ENCODE measurements at regions of chr11 and their contacts with region 1.

Region 1: GRCh38 chr11:46445920-46446771 is 54.6 kb upstream of the CHRM4 start:
- DNase-seq: no peak
- H3K4me3 ChIP-seq: no peak overlapping the region
- H3K27ac ChIP-seq: no peak overlapping the region
- H3K4me1 ChIP-seq: no peaks in the 10 kb centered on the region
- H3K27me3 ChIP-seq: no peaks in the 10 kb centered on the region
- CTCF ChIP-seq: no peak

Region 2: DNA sequence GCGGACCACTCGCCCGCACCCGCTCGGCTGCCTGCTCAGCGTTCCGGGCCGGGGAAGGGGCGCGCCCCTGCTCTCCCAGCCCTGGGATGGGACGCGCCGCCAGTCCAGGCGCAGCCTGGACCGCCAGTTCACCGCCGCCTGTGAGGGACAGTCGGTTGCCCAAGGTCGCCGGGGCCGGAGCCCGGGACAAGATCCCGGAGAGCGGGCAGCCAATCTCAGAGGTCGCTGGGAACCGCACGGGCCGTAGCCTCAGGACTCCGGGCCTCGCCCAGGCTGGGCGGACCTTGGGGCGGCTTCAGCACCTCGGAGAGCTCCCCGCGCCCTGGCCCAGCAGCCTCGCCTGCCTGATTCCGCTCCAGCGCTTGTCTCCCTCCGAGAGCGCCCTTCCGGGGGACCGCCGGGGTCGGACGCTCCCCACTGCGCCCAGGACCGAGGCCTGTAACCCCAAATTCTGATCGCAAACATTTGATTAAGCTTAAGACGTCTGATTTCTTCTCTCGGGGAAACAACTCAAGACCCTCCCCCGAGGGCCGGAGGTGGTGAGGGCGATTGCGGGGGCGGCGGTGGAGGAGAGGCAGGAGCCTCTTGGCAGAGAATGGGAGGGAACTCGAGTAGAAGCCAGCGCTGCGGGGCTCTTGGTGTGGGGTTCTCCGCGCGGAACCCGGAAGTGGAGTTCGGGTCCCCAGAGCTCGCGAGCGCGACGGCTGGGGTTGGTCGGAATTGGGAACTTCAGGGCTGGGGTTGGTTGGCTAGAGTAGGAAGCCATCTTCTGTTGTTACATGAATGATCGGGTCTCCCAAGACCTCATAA is 53.5 kb before region 1 on chr11:
- CTCF ChIA-PET with region 1: interaction called, 20 read pairs
- POLR2A ChIA-PET with region 1: no interaction called
- intact Hi-C with region 1: no loop called
- DNase-seq: peak; percentile 66 to 86
- H3K4me3 ChIP-seq: no peak overlapping the region
- H3K27ac ChIP-seq: no peak overlapping the region
- H3K4me1 ChIP-seq: 0 out of 2 replicates have a peak, but pooled peaks cover 4% of the 10 kb centered on the region
- H3K27me3 ChIP-seq: peaks cover 22% of the 10 kb centered on the region
- CTCF ChIP-seq: no peak

Region 3: DNA sequence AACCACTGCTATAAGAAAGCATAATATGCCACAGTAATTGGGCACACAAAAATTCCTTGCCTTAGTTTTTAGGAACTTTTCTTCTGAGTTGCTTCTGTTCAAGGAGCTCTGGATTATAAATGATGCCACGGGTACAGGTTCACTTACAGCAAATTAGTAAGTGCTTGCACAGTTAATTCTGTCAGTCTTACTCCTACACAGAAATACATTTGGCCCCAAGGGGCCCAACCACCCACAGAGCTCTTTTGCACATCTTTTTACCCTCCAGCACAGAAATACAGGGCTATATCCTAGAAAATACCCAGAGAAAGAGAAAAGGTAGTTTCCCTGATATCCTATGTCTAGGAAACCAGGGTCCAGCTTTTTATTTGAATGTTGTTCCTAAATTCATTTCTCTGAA is 32.0 kb after region 1 on chr11:
- CTCF ChIA-PET with region 1: interaction called, 10 read pairs
- POLR2A ChIA-PET with region 1: no interaction called
- intact Hi-C with region 1: no loop called
- DNase-seq: no peak
- H3K4me3 ChIP-seq: no peak overlapping the region
- H3K27ac ChIP-seq: no peak overlapping the region
- H3K4me1 ChIP-seq: peaks cover 6% of the 10 kb centered on the region
- H3K27me3 ChIP-seq: no peaks in the 10 kb centered on the region
- CTCF ChIP-seq: no peak

Region 4: GRCh38 chr11:46554205-46555055 is 108.3 kb after region 1 on chr11:
- CTCF ChIA-PET with region 1: no interaction called
- POLR2A ChIA-PET with region 1: interaction called, 13 read pairs
- intact Hi-C with region 1: no loop called
- DNase-seq: peak; percentile 17 to 97
- H3K4me3 ChIP-seq: peak overlapping the region; percentile 43; the same call in 1 of the 2 replicates
- H3K27ac ChIP-seq: peak overlapping the region; percentile 95
- H3K4me1 ChIP-seq: peaks cover 65% of the 10 kb centered on the region
- H3K27me3 ChIP-seq: no peaks in the 10 kb centered on the region
- CTCF ChIP-seq: no peak

Region 5: DNA sequence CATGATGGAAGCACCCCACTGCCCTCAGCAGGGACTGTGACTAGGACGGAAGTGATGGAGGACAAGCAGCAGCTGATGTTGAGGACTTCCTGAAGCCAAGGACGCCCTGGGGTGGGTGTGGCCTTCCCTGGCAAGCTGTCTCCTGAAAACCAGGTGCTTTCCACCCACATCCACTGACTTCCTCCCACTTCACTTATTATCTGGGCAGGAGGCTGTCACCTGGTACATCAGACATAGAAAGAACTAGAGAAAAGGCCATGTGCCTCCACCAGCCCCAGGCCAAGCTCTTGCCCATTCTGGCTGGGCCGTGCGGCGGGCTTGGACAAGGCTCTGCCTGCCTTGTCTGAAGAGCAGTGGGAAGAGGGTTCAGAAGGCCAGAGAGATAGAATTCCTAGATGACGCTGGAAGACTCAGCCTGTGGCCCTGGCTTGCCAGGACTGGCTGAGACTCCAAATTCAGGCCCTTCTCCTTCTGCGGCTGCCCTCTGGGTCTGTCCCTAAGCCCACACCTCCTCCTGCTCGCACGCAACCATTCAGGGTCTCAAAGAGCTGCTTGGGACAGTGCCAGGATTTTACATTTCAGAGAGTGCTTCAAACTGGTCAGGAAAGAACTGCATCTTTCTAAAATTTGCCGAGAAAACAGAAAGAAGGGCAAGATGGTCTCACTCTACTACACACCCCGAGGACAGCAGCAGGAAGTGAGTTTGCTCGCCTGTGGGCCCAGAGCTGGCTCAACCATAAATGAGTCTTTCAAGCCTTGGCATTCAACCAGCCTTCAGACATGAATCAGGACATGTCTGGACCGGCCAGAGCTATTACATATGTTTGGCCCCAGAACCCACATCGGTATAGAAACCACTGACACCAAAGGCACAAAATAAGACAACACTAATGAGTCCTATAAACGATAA is 241.0 kb after region 1 on chr11:
- CTCF ChIA-PET with region 1: interaction called, 11 read pairs
- POLR2A ChIA-PET with region 1: no interaction called
- intact Hi-C with region 1: no loop called
- DNase-seq: no peak
- H3K4me3 ChIP-seq: no peak overlapping the region
- H3K27ac ChIP-seq: no peak overlapping the region
- H3K4me1 ChIP-seq: no peaks in the 10 kb centered on the region
- H3K27me3 ChIP-seq: no peaks in the 10 kb centered on the region
- CTCF ChIP-seq: no peak

Region 6: DNA sequence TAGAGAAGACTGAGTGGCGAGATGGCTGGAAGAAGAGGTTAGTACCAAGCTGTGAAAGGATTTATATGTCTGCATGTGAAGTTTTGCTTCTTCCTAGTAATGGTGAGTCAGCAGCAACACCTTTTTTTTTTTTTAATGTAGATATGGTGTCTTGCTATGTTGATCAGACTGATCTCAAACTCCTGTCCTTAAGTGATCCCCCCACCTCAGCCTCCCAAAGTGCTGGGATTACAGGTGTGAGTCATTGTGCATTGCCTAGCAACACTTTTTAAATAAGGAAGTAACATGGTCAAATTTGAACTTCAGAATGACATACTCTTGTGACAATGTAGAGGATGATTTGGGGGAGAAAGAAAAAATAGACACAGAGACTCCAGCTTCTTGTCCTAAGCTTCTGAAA is 483.9 kb after region 1 on chr11:
- CTCF ChIA-PET with region 1: no interaction called
- POLR2A ChIA-PET with region 1: interaction called, 22 read pairs
- intact Hi-C with region 1: no loop called
- DNase-seq: peak; percentile 84 to 99
- H3K4me3 ChIP-seq: 0 out of 2 replicates have a peak overlapping the region, but pooled peaks have one; percentile 4
- H3K27ac ChIP-seq: peak overlapping the region; percentile 85
- H3K4me1 ChIP-seq: peaks cover 19% of the 10 kb centered on the region
- H3K27me3 ChIP-seq: no peaks in the 10 kb centered on the region
- CTCF ChIP-seq: no peak

Measured in PC-9 (cell line).